CD8-positive, alpha-beta T cell (primary cell): ENCODE measurements at regions of chr6 and their contacts with region 1.

Region 1: GRCh38 chr6:43506667-43507471 is 3.3 kb downstream of the LRRC73 start:
- DNase-seq: peak; percentile 64 to 89 (median 80)
- ATAC-seq: peak; percentile 74
- H3K4me3 ChIP-seq: no peak overlapping the region
- H3K4me3 Mint-ChIP-seq: no peak overlapping the region
- H3K27ac ChIP-seq: no peak overlapping the region
- H3K27ac Mint-ChIP-seq: peak overlapping the region; percentile 18
- H3K4me1 ChIP-seq: peaks cover 14% of the 10 kb centered on the region
- H3K4me1 Mint-ChIP-seq: peaks cover 14% of the 10 kb centered on the region
- H3K27me3 ChIP-seq: peaks cover 0 to 13% of the 10 kb centered on the region in 2 experiments
- H3K27me3 Mint-ChIP-seq: peaks cover 16% of the 10 kb centered on the region
- CTCF ChIP-seq: peak; percentile 87

Region 2: GRCh38 chr6:43263314-43264178 is 243.3 kb before region 1 on chr6:
- CTCF ChIA-PET with region 1: interaction called, 6 read pairs
- POLR2A ChIA-PET with region 1: no interaction called
- intact Hi-C with region 1: loop called in 1 of 2 experiments (anchors 1 kb)
- DNase-seq: peak; percentile 57 to 84 (median 75)
- ATAC-seq: peak; percentile 95
- H3K4me3 ChIP-seq: no peak overlapping the region
- H3K4me3 Mint-ChIP-seq: no peak overlapping the region
- H3K27ac ChIP-seq: no peak overlapping the region
- H3K27ac Mint-ChIP-seq: no peak overlapping the region
- H3K4me1 ChIP-seq: no peaks in the 10 kb centered on the region
- H3K4me1 Mint-ChIP-seq: no peaks in the 10 kb centered on the region
- H3K27me3 ChIP-seq: no peaks in the 10 kb centered on the region
- H3K27me3 Mint-ChIP-seq: peaks cover 3% of the 10 kb centered on the region
- CTCF ChIP-seq: peak; percentile 57

Region 3: GRCh38 chr6:43434001-43434840 is 72.6 kb before region 1 on chr6:
- CTCF ChIA-PET with region 1: interaction called, 14 read pairs
- POLR2A ChIA-PET with region 1: no interaction called
- intact Hi-C with region 1: no loop called
- DNase-seq: no peak
- ATAC-seq: no peak
- H3K4me3 ChIP-seq: no peak overlapping the region
- H3K4me3 Mint-ChIP-seq: no peak overlapping the region
- H3K27ac ChIP-seq: no peak overlapping the region
- H3K27ac Mint-ChIP-seq: no peak overlapping the region
- H3K4me1 ChIP-seq: no peaks in the 10 kb centered on the region
- H3K4me1 Mint-ChIP-seq: peaks cover 11% of the 10 kb centered on the region
- H3K27me3 ChIP-seq: no peaks in the 10 kb centered on the region
- H3K27me3 Mint-ChIP-seq: no peaks in the 10 kb centered on the region
- CTCF ChIP-seq: no peak

Region 4: GRCh38 chr6:43477235-43478007 is 29.4 kb before region 1 on chr6 and contains the start of gene TJAP1:
- CTCF ChIA-PET with region 1: interaction called, 14 read pairs
- POLR2A ChIA-PET with region 1: interaction called, 7 read pairs
- intact Hi-C with region 1: no loop called
- DNase-seq: peak; percentile 93 to 98 (median 96)
- ATAC-seq: peak; percentile 99
- H3K4me3 ChIP-seq: peak within 1 kb of the TSS; percentile 64 to 83
- H3K4me3 Mint-ChIP-seq: peak within 1 kb of the TSS; percentile 95
- H3K27ac ChIP-seq: peak within 1 kb of the TSS; percentile 93 to 95
- H3K27ac Mint-ChIP-seq: peak within 1 kb of the TSS; percentile 97
- H3K4me1 ChIP-seq: peaks cover 17% of the 10 kb centered on the region
- H3K4me1 Mint-ChIP-seq: peaks cover 48% of the 10 kb centered on the region
- H3K27me3 ChIP-seq: no peaks in the 10 kb centered on the region
- H3K27me3 Mint-ChIP-seq: no peaks in the 10 kb centered on the region
- CTCF ChIP-seq: no peak
- total RNA-seq, gene TJAP1: 29.2 to 29.7 TPM

Region 5: DNA sequence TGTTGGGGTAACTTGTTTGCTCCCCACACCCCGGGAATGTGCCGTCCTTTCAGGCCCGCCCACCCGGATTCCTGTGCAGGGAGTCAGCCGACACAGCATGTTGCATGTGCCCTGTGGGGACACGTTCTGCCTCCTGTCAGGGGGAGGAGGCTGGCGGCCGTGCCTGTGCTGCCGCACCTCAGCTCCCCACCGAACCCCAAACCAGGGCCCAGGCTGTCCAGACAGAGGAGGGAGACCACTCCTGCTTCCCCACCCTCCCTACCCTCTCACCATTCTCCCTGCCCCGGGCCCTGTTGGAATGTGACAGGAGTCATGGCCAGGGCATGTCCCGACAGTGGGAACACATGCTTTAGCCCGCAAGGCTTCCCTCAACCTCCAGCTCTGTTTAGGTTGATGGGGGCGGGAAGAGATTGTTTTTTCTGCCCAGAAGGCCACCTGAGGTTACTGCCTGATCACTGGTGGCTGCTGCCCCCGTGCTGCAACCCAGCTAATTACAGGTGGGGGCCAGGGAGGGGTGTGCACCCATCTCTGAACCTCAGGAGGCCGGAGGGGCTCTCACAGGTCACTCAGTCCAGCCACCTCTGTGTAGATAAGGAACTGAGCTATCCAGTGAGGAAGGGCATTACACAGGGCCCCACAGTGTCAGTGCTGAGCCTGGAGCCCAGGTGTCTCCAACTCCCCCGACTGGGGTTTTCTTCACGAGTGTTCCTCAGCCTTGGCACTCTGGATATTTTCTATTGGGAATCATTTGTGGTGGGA is 10.3 kb before region 1 on chr6:
- CTCF ChIA-PET with region 1: interaction called, 58 read pairs
- POLR2A ChIA-PET with region 1: no interaction called
- intact Hi-C with region 1: no loop called
- DNase-seq: peak in 3 of 9 experiments; percentile 23 to 42 (median 35)
- ATAC-seq: peak; percentile 44
- H3K4me3 ChIP-seq: no peak overlapping the region
- H3K4me3 Mint-ChIP-seq: no peak overlapping the region
- H3K27ac ChIP-seq: no peak overlapping the region
- H3K27ac Mint-ChIP-seq: no peak overlapping the region
- H3K4me1 ChIP-seq: peaks cover 15% of the 10 kb centered on the region
- H3K4me1 Mint-ChIP-seq: peaks cover 27% of the 10 kb centered on the region
- H3K27me3 ChIP-seq: no peaks in the 10 kb centered on the region
- H3K27me3 Mint-ChIP-seq: no peaks in the 10 kb centered on the region
- CTCF ChIP-seq: no peak